ENCODE measurements at regions of chr5 and their contacts with region 1.

Region 1: DNA sequence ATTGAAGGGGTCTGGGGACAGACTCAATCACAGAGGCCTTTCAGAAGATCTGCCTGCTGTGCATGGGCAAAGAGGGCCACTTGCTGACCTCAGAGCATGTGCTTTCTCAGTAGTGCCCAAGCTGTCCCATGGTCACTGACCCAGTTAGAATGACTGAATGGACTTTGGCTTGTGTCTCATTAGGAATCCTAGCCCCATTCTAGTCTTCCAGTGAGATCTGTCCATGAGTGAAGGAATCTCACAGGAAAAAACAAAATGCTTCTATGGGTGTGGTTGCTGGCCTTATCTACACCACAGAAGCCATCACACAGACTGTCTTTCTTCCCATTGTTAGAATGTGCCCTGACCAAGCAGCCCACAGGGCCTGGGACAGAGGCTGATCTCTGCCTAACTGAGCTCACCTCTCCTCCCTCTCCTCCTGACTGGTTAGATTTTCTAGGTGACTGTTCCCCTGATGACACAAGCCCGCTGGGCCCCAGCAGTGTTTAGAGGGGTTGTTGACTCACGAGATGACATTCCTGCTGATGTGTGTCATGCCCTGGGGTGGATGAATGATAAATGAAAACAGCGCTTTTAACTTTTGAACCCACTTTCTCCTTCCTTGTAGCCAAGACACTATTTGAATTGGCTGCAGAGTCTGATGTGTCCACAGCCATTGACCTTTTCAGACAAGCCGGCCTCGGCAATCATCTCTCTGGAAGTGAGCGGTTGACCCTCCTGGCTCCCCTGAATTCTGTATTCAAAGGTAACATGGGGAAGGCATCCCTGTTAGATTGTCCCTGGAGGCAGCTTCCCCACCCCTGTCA is 24.8 kb downstream of the TGFBI start:
- DNase-seq: peak; percentile 99
- ATAC-seq: peak; percentile 91
- H3K4me3 ChIP-seq: peak overlapping the region in 2 of 3 experiments; percentile 3 to 7; a peak in 1 of 6 replicates
- H3K27ac ChIP-seq: peak overlapping the region; percentile 94
- H3K4me1 ChIP-seq: peaks cover 73% of the 10 kb centered on the region
- H3K27me3 ChIP-seq: no peaks in the 10 kb centered on the region
- CTCF ChIP-seq: 0 out of 2 replicates have a peak, but pooled peaks have one; percentile 8
- EP300 ChIP-seq: peak; percentile 91 to 98
- POLR2A ChIP-seq: peak; percentile 43 to 92
- RAD21 ChIP-seq: peak; percentile 19; the same call in 1 of the 2 replicates

Region 2: DNA sequence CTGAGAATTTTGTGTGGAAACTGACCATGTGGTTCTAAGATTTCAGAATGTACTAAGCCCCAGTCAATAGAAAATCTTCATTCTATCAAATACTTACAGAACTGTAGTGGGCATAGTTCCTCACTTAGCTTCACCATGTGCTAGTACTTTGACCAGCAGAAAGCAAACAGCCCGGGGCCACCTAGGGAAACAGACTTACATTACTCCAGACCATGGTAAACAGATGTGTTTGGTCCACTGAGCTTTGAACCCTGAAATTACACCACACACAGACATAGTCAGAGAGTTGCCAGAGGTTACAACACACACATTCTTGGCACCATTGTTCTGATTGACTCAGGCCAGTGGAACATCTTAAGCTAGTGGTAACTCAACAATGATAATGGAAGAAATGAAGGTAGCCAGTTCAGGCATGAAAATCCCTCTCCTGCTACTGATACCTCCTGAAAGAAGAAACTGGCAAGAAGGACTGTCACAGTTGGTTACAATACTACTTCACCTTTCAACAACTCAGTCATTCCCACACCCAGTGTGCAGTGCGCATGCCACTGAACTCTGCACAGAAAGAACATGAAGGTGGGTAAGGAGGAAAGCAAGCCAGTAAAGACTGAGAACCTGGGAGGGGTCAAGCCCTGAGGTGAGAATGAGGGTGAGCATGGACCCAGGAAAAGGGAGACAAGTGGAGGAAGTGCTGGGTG is 80.1 kb before region 1 on chr5:
- CTCF ChIA-PET with region 1: interaction called, 5 read pairs
- POLR2A ChIA-PET with region 1: interaction called, 96 read pairs
- in situ Hi-C with region 1: no loop called
- intact Hi-C with region 1: loop called (anchors 1 kb)
- DNase-seq: peak; percentile 99
- ATAC-seq: peak; percentile 97
- H3K4me3 ChIP-seq: peak overlapping the region; percentile 7 to 49 (median 20); a peak in 5 of 6 replicates
- H3K27ac ChIP-seq: peak overlapping the region; percentile 98
- H3K4me1 ChIP-seq: peaks cover 55% of the 10 kb centered on the region
- H3K27me3 ChIP-seq: no peaks in the 10 kb centered on the region
- CTCF ChIP-seq: peak; percentile 32; the same call in 1 of the 2 replicates
- EP300 ChIP-seq: peak; percentile 96 to 99
- POLR2A ChIP-seq: peak; percentile 33 to 47; a peak in 2 of 4 replicates
- RAD21 ChIP-seq: peak; percentile 29; the same call in 1 of the 2 replicates

Region 3: GRCh38 chr5:136028782-136029742 is 24.5 kb before region 1 on chr5 and contains the start of gene TGFBI:
- CTCF ChIA-PET with region 1: no interaction called
- POLR2A ChIA-PET with region 1: interaction called, 129 read pairs
- in situ Hi-C with region 1: no loop called
- intact Hi-C with region 1: loop called (anchors 1 kb)
- DNase-seq: peak; percentile 61
- ATAC-seq: peak; percentile 95
- H3K4me3 ChIP-seq: peak within 1 kb of the TSS; percentile 80 to 85 (median 84)
- H3K27ac ChIP-seq: peak within 1 kb of the TSS; percentile 61
- H3K4me1 ChIP-seq: peaks cover 56% of the 10 kb centered on the region
- H3K27me3 ChIP-seq: no peaks in the 10 kb centered on the region; a peak in 2 of 5 replicates
- CTCF ChIP-seq: peak; percentile 70
- EP300 ChIP-seq: no peak
- POLR2A ChIP-seq: peak; percentile 82 to 94
- RAD21 ChIP-seq: peak; percentile 75
- total RNA-seq, gene TGFBI: 138 and 275 TPM in 2 replicates

Region 4: DNA sequence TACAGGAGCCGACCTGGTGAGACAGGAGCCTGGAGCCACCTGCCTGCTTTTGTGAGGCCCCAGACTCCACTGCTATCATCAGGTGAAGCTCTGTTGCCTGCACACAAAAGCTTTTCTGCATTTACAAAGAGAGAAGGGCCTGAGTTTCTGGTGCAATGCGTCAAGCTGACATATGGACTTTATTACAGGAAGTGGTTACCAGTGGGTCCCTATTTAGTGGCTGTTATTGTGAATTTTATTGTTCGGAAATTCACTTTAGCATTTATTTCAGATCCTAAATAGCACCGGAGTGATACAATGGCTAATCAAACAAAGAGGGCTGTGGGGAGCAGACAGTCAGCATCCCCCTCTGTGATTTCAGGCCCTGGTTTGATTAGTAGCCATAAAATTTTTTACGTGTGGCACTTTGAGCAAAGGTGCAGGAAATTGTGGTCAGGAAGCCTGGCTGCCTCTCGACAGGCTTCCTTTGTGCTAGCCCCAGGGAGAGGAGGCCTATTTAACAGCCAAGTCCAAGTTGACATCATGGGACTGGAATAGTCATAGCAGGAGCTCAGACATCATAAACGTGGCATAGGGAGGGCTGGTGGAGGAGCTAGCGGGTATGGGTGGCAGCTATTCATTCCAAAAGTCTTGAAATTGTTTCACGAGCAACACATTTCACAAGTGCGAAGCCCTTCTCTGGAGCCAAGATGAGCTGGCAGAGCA is 16.4 kb before region 1 on chr5:
- CTCF ChIA-PET with region 1: no interaction called
- POLR2A ChIA-PET with region 1: interaction called, 129 read pairs
- in situ Hi-C with region 1: no loop called
- intact Hi-C with region 1: loop called (anchors 2 kb)
- DNase-seq: no peak
- ATAC-seq: no peak
- H3K4me3 ChIP-seq: no peak overlapping the region
- H3K27ac ChIP-seq: no peak overlapping the region
- H3K4me1 ChIP-seq: peaks cover 35% of the 10 kb centered on the region
- H3K27me3 ChIP-seq: no peaks in the 10 kb centered on the region
- CTCF ChIP-seq: no peak
- EP300 ChIP-seq: no peak
- POLR2A ChIP-seq: no peak
- RAD21 ChIP-seq: no peak

Region 5: DNA sequence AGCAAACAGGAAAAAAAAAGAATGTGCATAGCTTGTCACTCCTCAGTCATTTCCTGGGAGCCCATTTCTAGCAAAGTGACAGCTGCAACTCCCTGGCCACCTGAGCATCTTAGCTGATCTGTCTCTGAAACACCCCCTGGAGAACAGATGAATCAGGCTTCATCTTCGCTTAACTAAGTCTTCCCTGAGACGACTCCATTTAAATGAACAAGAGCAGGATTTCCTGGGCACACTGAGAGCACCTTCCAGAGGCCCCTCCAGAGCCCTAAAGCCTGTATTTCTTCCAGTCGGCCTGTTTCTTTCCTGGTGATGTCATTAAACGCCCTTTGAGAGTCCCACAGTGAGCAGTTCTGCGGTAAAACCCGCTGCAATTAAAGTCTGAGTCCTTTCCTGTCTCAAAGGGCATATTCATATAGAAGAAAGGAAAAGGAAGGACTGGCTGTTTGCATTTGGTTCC is 10.8 kb before region 1 on chr5:
- CTCF ChIA-PET with region 1: no interaction called
- POLR2A ChIA-PET with region 1: interaction called, 129 read pairs
- in situ Hi-C with region 1: no loop called
- intact Hi-C with region 1: no loop called
- DNase-seq: peak; percentile 29
- ATAC-seq: peak; percentile 43
- H3K4me3 ChIP-seq: no peak overlapping the region
- H3K27ac ChIP-seq: no peak overlapping the region
- H3K4me1 ChIP-seq: peaks cover 19% of the 10 kb centered on the region
- H3K27me3 ChIP-seq: no peaks in the 10 kb centered on the region
- CTCF ChIP-seq: no peak
- EP300 ChIP-seq: no peak
- POLR2A ChIP-seq: no peak
- RAD21 ChIP-seq: no peak

Region 6: GRCh38 chr5:136149891-136150290 is 96.4 kb after region 1 on chr5:
- CTCF ChIA-PET with region 1: no interaction called
- POLR2A ChIA-PET with region 1: no interaction called
- in situ Hi-C with region 1: no loop called
- intact Hi-C with region 1: no loop called
- DNase-seq: no peak
- ATAC-seq: no peak
- H3K4me3 ChIP-seq: no peak overlapping the region
- H3K27ac ChIP-seq: no peak overlapping the region
- H3K4me1 ChIP-seq: peaks cover 31% of the 10 kb centered on the region
- H3K27me3 ChIP-seq: no peaks in the 10 kb centered on the region
- CTCF ChIP-seq: no peak
- EP300 ChIP-seq: no peak
- POLR2A ChIP-seq: no peak
- RAD21 ChIP-seq: no peak

Measured in HepG2 (cell line).